CD4-positive, alpha-beta memory T cell (primary cell): ENCODE measurements at regions of chr14 and their contacts with region 1.

Region 1: GRCh38 chr14:60248697-60249318 is at the start of gene PPM1A:
- DNase-seq: peak; percentile 93 to 95 (median 94)
- H3K4me3 ChIP-seq: peak within 1 kb of the TSS; percentile 79 to 92
- H3K4me3 Mint-ChIP-seq: peak within 1 kb of the TSS; percentile 95 to 98 (median 97)
- H3K27ac ChIP-seq: peak within 1 kb of the TSS; percentile 99
- H3K27ac Mint-ChIP-seq: peak within 1 kb of the TSS; percentile 99 to 100 (median 100)
- H3K4me1 ChIP-seq: peaks cover 55% of the 10 kb centered on the region
- H3K4me1 Mint-ChIP-seq: peaks cover 32 to 56% (median 42%) of the 10 kb centered on the region in 4 donors
- H3K27me3 ChIP-seq: no peaks in the 10 kb centered on the region
- H3K27me3 Mint-ChIP-seq: peaks cover 0 to 1% of the 10 kb centered on the region in 2 donors
- total RNA-seq, gene PPM1A: 48.2 to 48.5 TPM

Region 2: GRCh38 chr14:58427281-58428117 is 1821.3 kb before region 1 on chr14 and contains the starts of genes KIAA0586 and TIMM9:
- CTCF ChIA-PET with region 1: no interaction called
- POLR2A ChIA-PET with region 1: interaction called, 8 read pairs
- intact Hi-C with region 1: loop called (anchors 2 kb)
- DNase-seq: peak; percentile 95 to 99 (median 98)
- H3K4me3 ChIP-seq: peak within 1 kb of the TSS; percentile 90 to 96
- H3K4me3 Mint-ChIP-seq: peak within 1 kb of the TSS; percentile 91 to 97 (median 94)
- H3K27ac ChIP-seq: peak within 1 kb of the TSS; percentile 88
- H3K27ac Mint-ChIP-seq: peak within 1 kb of the TSS; percentile 94 to 100 (median 98)
- H3K4me1 ChIP-seq: peaks cover 39% of the 10 kb centered on the region
- H3K4me1 Mint-ChIP-seq: peaks cover 23 to 67% (median 44%) of the 10 kb centered on the region in 4 donors
- H3K27me3 ChIP-seq: no peaks in the 10 kb centered on the region
- H3K27me3 Mint-ChIP-seq: peaks cover 0 to 2% of the 10 kb centered on the region in 2 donors
- total RNA-seq, gene KIAA0586: 43.3 to 48.2 TPM
- total RNA-seq, gene TIMM9: 28.0 to 28.3 TPM

Region 3: DNA sequence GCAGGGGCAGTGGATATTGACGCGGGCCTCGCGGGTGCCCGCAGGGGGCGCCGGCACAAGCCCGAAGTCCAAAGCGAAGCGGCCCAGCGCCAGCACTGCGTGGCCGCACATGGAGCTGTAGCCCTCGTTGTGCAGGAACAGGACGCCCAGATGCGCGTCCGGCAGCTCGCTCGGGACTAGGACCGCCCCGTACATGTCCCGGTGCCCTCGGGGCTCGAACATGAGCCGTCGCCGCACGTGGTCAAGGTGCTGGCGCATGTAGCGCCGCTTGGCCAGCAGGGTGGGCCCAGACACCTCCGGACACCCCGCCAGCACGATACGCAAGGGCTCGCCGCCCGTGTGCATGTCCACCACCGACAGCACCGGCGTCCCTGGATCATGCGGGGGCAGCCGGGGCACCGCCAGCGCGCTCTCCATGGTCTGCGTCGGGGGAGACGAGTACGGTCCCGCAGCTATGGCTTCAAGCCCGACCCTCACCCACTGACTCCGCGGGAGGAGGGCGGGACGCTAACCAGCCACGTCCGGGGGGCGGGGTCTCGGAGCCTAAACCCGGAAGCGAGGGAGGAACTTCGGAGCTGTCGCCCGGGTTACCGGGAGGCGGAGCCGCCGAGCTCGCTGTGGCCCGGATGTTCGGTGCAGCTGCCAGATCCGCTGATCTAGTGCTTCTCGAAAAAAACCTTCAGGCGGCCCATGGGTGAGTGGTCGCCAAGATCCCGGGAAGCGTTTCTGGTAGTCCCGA is 764.7 kb before region 1 on chr14 and contains the starts of genes JKAMP and L3HYPDH:
- CTCF ChIA-PET with region 1: no interaction called
- POLR2A ChIA-PET with region 1: interaction called, 13 read pairs
- intact Hi-C with region 1: loop called (anchors 1 kb)
- DNase-seq: peak; percentile 95 to 97 (median 95)
- H3K4me3 ChIP-seq: peak within 1 kb of the TSS; percentile 85 to 87
- H3K4me3 Mint-ChIP-seq: peak within 1 kb of the TSS; percentile 92 to 98 (median 96)
- H3K27ac ChIP-seq: peak within 1 kb of the TSS; percentile 82
- H3K27ac Mint-ChIP-seq: peak within 1 kb of the TSS; percentile 90 to 99 (median 96)
- H3K4me1 ChIP-seq: peaks cover 63% of the 10 kb centered on the region
- H3K4me1 Mint-ChIP-seq: peaks cover 52 to 72% (median 58%) of the 10 kb centered on the region in 4 donors
- H3K27me3 ChIP-seq: no peaks in the 10 kb centered on the region
- H3K27me3 Mint-ChIP-seq: no peaks in the 10 kb centered on the region
- total RNA-seq, gene JKAMP: 29.9 to 31.9 TPM
- total RNA-seq, gene L3HYPDH: 52.2 to 52.4 TPM

Region 4: GRCh38 chr14:60091550-60092530 is 157.0 kb before region 1 on chr14 and contains the start of gene PCNX4:
- CTCF ChIA-PET with region 1: interaction called, 4 read pairs
- POLR2A ChIA-PET with region 1: interaction called, 61 read pairs
- intact Hi-C with region 1: loop called (anchors 1 kb)
- DNase-seq: peak; percentile 93 to 97 (median 96)
- H3K4me3 ChIP-seq: peak within 1 kb of the TSS; percentile 71 to 97
- H3K4me3 Mint-ChIP-seq: peak within 1 kb of the TSS; percentile 90 to 98 (median 92)
- H3K27ac ChIP-seq: peak within 1 kb of the TSS; percentile 99
- H3K27ac Mint-ChIP-seq: peak within 1 kb of the TSS; percentile 95 to 100 (median 97)
- H3K4me1 ChIP-seq: peaks cover 34% of the 10 kb centered on the region
- H3K4me1 Mint-ChIP-seq: peaks cover 27 to 55% (median 38%) of the 10 kb centered on the region in 4 donors
- H3K27me3 ChIP-seq: no peaks in the 10 kb centered on the region
- H3K27me3 Mint-ChIP-seq: no peaks in the 10 kb centered on the region
- total RNA-seq, gene PCNX4: 41.5 to 53.0 TPM

Region 5: DNA sequence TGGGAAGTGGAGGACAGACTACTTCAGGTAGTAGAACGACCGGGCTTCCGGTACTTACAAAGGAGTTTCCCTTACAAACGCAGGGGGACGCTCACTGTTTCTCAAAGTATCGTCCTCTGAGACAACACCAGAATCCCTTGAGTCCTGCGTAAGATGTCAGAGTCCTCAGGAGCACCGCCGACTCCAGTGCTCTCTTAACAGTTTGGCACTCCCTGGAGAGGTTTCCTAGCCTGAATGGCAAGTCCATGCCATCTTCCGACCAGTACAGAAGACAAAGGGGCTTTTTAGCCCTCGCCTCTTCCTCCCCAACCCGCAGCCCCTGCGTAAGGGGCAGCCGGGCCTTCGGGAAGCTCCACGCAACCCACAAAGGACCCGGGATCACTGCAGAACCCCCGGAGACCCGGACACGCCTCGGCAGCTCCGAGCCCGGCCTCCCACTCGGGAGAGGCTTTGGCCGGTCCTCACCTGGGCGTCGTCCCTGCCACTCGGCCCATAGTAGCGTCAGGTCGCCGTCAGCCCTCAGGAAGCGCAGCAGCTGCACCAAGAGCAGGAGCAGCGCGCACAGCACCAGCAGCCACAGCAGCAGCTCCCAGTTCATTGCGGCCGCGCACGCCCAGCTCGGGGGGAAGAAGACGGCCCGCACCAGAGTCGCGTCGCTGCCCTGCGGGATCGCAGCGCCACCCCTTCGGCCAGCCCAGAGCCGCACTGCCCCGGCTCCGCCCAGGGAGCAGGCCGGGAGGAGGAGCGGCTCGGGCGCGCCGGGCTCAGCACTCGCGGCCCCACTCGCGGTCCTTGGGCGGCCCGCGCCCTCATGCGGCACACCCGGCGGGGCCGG is 83.9 kb before region 1 on chr14 and contains the start of gene DHRS7:
- CTCF ChIA-PET with region 1: interaction called, 18 read pairs
- POLR2A ChIA-PET with region 1: interaction called, 101 read pairs
- intact Hi-C with region 1: loop called (anchors 1 kb)
- DNase-seq: peak; percentile 61 to 74 (median 65)
- H3K4me3 ChIP-seq: peak within 1 kb of the TSS; percentile 74 to 76
- H3K4me3 Mint-ChIP-seq: peak within 1 kb of the TSS; percentile 96 to 99 (median 99)
- H3K27ac ChIP-seq: peak within 1 kb of the TSS; percentile 82
- H3K27ac Mint-ChIP-seq: peak within 1 kb of the TSS; percentile 97 to 99 (median 99)
- H3K4me1 ChIP-seq: peaks cover 53% of the 10 kb centered on the region
- H3K4me1 Mint-ChIP-seq: peaks cover 36 to 56% (median 47%) of the 10 kb centered on the region in 4 donors
- H3K27me3 ChIP-seq: no peaks in the 10 kb centered on the region
- H3K27me3 Mint-ChIP-seq: no peaks in the 10 kb centered on the region
- total RNA-seq, gene DHRS7: 63.5 to 69.6 TPM

Region 6: GRCh38 chr14:60288279-60288678 is 39.5 kb after region 1 on chr14:
- CTCF ChIA-PET with region 1: no interaction called
- POLR2A ChIA-PET with region 1: interaction called, 3 read pairs
- intact Hi-C with region 1: loop called (anchors 5 kb)
- DNase-seq: no peak
- H3K4me3 ChIP-seq: no peak overlapping the region
- H3K4me3 Mint-ChIP-seq: no peak overlapping the region
- H3K27ac ChIP-seq: no peak overlapping the region
- H3K27ac Mint-ChIP-seq: peak overlapping the region in 1 of 7 donors; percentile 18
- H3K4me1 ChIP-seq: no peaks in the 10 kb centered on the region
- H3K4me1 Mint-ChIP-seq: peaks cover 0 to 2% (median 0%) of the 10 kb centered on the region in 4 donors
- H3K27me3 ChIP-seq: no peaks in the 10 kb centered on the region
- H3K27me3 Mint-ChIP-seq: no peaks in the 10 kb centered on the region

Region 7: DNA sequence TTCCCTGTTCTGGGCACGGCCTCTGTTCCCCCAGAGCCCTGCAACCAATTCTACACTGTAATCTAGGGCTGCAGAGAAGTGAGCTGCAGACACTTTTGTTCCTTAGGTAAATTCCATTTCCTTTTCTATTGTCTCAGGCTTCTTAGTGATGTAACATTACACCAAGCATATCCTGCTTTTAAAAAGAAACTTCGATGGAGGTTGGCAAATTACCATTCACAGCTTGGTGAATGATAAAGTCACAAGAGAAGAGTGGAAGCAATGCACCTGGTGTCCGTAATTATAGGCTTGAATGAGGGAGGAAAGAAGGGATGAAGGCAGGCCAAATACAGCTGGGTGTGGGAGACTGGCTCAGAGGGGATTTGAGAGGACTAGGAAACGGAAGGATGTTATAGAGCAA is 68.8 kb after region 1 on chr14:
- CTCF ChIA-PET with region 1: no interaction called
- POLR2A ChIA-PET with region 1: no interaction called
- intact Hi-C with region 1: no loop called
- DNase-seq: no peak
- H3K4me3 ChIP-seq: no peak overlapping the region
- H3K4me3 Mint-ChIP-seq: no peak overlapping the region
- H3K27ac ChIP-seq: no peak overlapping the region
- H3K27ac Mint-ChIP-seq: no peak overlapping the region
- H3K4me1 ChIP-seq: no peaks in the 10 kb centered on the region
- H3K4me1 Mint-ChIP-seq: no peaks in the 10 kb centered on the region
- H3K27me3 ChIP-seq: no peaks in the 10 kb centered on the region
- H3K27me3 Mint-ChIP-seq: peaks cover 7 to 8% of the 10 kb centered on the region in 2 donors

Region 8: GRCh38 chr14:60339571-60339970 is 90.8 kb after region 1 on chr14:
- CTCF ChIA-PET with region 1: no interaction called
- POLR2A ChIA-PET with region 1: no interaction called
- intact Hi-C with region 1: no loop called
- DNase-seq: no peak
- H3K4me3 ChIP-seq: no peak overlapping the region
- H3K4me3 Mint-ChIP-seq: no peak overlapping the region
- H3K27ac ChIP-seq: no peak overlapping the region
- H3K27ac Mint-ChIP-seq: no peak overlapping the region
- H3K4me1 ChIP-seq: no peaks in the 10 kb centered on the region
- H3K4me1 Mint-ChIP-seq: no peaks in the 10 kb centered on the region
- H3K27me3 ChIP-seq: peaks cover 5% of the 10 kb centered on the region
- H3K27me3 Mint-ChIP-seq: peaks cover 26 to 27% of the 10 kb centered on the region in 2 donors

Region 9: DNA sequence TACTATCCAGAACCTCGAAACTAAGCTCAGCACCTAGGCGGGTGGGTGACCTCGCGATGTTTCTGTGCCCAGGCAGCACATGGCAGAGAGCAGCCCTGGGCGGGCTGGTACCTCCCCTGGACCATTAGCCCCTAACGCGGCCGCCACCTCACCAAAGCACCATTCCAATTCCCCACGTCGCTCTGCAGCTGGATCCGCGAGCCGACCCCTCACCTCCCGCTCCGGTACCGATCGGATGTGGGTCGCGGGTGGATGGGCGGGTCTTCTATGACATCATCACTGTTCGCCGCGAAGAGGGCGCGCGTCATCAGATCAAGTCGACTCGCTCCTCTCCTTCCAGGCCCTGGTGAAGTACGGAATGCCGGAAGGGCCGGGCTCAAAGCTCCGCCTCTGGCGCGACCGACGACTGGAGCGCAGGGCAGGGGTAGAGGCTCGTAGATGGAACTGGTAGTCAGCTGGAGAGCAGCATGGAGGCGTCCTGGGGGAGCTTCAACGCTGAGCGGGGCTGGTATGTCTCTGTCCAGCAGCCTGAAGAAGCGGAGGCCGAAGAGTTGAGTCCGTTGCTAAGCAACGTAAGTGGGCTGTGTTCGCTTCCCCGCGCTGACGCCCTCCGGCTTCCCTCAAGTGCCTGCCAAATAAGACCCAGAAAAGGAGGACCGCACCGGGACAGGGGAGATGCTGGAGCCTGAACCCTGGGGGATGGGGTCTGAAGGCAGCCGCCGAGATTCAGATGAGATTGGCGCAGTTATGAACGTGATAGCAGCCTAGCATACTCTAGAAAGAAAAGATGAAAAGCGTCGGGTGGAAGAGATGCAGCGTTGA is 732.2 kb after region 1 on chr14 and contains the starts of genes SLC38A6 and TRMT5:
- CTCF ChIA-PET with region 1: no interaction called
- POLR2A ChIA-PET with region 1: interaction called, 11 read pairs
- intact Hi-C with region 1: loop called (anchors 2 kb)
- DNase-seq: peak; percentile 92 to 94 (median 93)
- H3K4me3 ChIP-seq: peak within 1 kb of the TSS; percentile 78 to 96
- H3K4me3 Mint-ChIP-seq: no peak within 1 kb of the TSS
- H3K27ac ChIP-seq: peak within 1 kb of the TSS; percentile 84
- H3K27ac Mint-ChIP-seq: no peak within 1 kb of the TSS
- H3K4me1 ChIP-seq: peaks cover 32% of the 10 kb centered on the region
- H3K4me1 Mint-ChIP-seq: peaks cover 16 to 22% (median 17%) of the 10 kb centered on the region in 4 donors
- H3K27me3 ChIP-seq: no peaks in the 10 kb centered on the region
- H3K27me3 Mint-ChIP-seq: no peaks in the 10 kb centered on the region
- total RNA-seq, gene SLC38A6: 19.9 to 21.3 TPM
- total RNA-seq, gene TRMT5: 8.5 to 11.8 TPM